ENCODE measurements at regions of chr11 and their contacts with region 1.

Region 1: GRCh38 chr11:72471005-72471898 is 36.9 kb upstream of the CLPB start:
- DNase-seq: peak; percentile 62
- ATAC-seq: peak; percentile 99
- H3K4me3 ChIP-seq: no peak overlapping the region
- H3K27ac ChIP-seq: no peak overlapping the region
- H3K4me1 ChIP-seq: no peaks in the 10 kb centered on the region
- H3K27me3 ChIP-seq: peaks cover 39% of the 10 kb centered on the region
- CTCF ChIP-seq: peak; percentile 80
- POLR2A ChIP-seq: no peak
- RAD21 ChIP-seq: peak; percentile 73

Region 2: GRCh38 chr11:72454791-72455190 is 16.5 kb before region 1 on chr11:
- CTCF ChIA-PET with region 1: interaction called, 18 read pairs
- POLR2A ChIA-PET with region 1: no interaction called
- dilution Hi-C with region 1: no loop called
- in situ Hi-C with region 1: no loop called
- intact Hi-C with region 1: no loop called
- DNase-seq: no peak
- ATAC-seq: no peak
- H3K4me3 ChIP-seq: no peak overlapping the region
- H3K27ac ChIP-seq: no peak overlapping the region
- H3K4me1 ChIP-seq: no peaks in the 10 kb centered on the region
- H3K27me3 ChIP-seq: peaks cover 54% of the 10 kb centered on the region
- CTCF ChIP-seq: no peak
- POLR2A ChIP-seq: no peak
- RAD21 ChIP-seq: no peak

Region 3: GRCh38 chr11:72460091-72460647 is 11.1 kb before region 1 on chr11:
- CTCF ChIA-PET with region 1: interaction called, 18 read pairs
- POLR2A ChIA-PET with region 1: no interaction called
- dilution Hi-C with region 1: no loop called
- in situ Hi-C with region 1: no loop called
- intact Hi-C with region 1: no loop called
- DNase-seq: no peak
- ATAC-seq: no peak
- H3K4me3 ChIP-seq: no peak overlapping the region
- H3K27ac ChIP-seq: no peak overlapping the region
- H3K4me1 ChIP-seq: no peaks in the 10 kb centered on the region
- H3K27me3 ChIP-seq: peaks cover 54% of the 10 kb centered on the region
- CTCF ChIP-seq: no peak
- POLR2A ChIP-seq: no peak
- RAD21 ChIP-seq: no peak

Region 4: GRCh38 chr11:72537051-72537450 is 65.8 kb after region 1 on chr11:
- CTCF ChIA-PET with region 1: no interaction called
- POLR2A ChIA-PET with region 1: no interaction called
- dilution Hi-C with region 1: no loop called
- in situ Hi-C with region 1: no loop called
- intact Hi-C with region 1: no loop called
- DNase-seq: no peak
- ATAC-seq: no peak
- H3K4me3 ChIP-seq: no peak overlapping the region
- H3K27ac ChIP-seq: no peak overlapping the region
- H3K4me1 ChIP-seq: no peaks in the 10 kb centered on the region
- H3K27me3 ChIP-seq: peaks cover 41% of the 10 kb centered on the region
- CTCF ChIP-seq: no peak
- POLR2A ChIP-seq: no peak
- RAD21 ChIP-seq: no peak

Region 5: DNA sequence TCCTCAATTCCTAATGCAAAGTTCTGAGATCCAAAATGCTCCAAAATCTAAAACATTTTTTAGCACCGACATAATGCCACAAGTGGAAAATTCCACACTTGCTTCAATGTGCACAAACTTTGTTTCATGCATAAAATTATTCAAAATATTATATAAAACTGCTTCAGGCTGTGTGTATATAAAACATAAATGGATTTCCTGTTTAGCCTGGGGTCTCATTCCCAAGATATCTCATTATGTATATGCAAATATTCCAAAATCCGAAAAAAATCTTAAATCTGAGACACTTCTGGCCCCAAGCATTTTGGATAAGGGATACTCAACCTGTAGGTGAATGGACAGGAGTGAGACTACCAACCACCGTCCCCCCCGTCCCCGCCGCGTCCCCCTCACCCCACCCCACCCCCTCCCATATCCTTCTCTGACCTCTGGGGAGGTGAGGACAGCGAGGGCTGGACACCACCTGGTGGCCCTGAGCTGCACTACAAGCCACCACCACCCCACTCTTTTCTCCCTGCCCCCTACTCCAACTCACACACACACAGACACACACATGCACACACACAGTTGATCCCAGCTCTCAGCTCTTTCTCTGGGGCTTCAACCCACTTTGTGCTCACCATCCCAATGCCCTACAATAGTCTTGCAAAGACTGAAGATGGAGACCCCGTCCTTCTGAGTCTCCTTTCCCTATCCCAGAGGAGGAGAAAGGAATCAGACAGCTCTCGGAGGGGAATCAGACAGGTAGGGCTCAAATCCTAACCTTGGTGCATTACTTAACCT is 102.0 kb after region 1 on chr11:
- CTCF ChIA-PET with region 1: no interaction called
- POLR2A ChIA-PET with region 1: no interaction called
- dilution Hi-C with region 1: no loop called
- in situ Hi-C with region 1: no loop called
- intact Hi-C with region 1: loop called (anchors 1 kb)
- DNase-seq: peak; percentile 11
- ATAC-seq: peak; percentile 88
- H3K4me3 ChIP-seq: no peak overlapping the region
- H3K27ac ChIP-seq: no peak overlapping the region
- H3K4me1 ChIP-seq: 0 out of 2 replicates have a peak, but pooled peaks cover 1% of the 10 kb centered on the region
- H3K27me3 ChIP-seq: peaks cover 24% of the 10 kb centered on the region
- CTCF ChIP-seq: peak; percentile 54
- POLR2A ChIP-seq: no peak
- RAD21 ChIP-seq: peak; percentile 58

Region 6: GRCh38 chr11:72613977-72614376 is 142.7 kb after region 1 on chr11:
- CTCF ChIA-PET with region 1: no interaction called
- POLR2A ChIA-PET with region 1: no interaction called
- dilution Hi-C with region 1: no loop called
- in situ Hi-C with region 1: no loop called
- intact Hi-C with region 1: no loop called
- DNase-seq: no peak
- ATAC-seq: no peak
- H3K4me3 ChIP-seq: no peak overlapping the region
- H3K27ac ChIP-seq: no peak overlapping the region
- H3K4me1 ChIP-seq: no peaks in the 10 kb centered on the region
- H3K27me3 ChIP-seq: peaks cover 84% of the 10 kb centered on the region
- CTCF ChIP-seq: no peak
- POLR2A ChIP-seq: no peak
- RAD21 ChIP-seq: no peak

Region 7: DNA sequence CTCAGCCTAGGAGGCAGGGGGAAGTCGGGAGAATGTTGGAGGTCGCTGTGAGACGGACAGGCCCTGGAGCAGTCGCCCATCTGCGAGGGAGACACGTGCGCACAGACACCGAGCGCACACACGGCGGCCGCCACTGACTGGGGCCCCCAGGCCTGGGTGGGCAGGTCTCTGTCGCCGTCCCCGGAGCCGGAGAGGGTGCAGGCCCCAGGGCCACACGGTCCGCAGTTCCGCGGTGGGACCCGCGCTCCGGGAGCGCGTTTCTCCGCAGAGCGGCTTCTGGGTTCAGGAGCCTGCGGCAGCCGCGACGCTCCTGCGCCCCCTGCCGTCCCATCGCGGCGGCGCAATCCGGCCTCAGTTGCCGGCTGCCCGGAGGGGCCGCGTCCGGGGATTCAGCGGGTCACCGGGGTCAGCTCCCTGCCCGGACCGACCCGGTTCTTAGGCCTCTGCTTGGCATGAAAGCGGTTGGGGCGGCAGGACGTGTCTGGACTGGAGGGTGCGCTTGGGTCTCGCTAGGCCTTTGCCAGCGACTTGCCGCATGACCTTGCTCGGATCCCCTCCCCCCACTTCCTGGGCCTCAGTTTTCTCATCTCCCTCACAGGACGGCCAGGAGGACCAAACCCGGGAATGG is 171.7 kb after region 1 on chr11:
- CTCF ChIA-PET with region 1: interaction called, 5 read pairs
- POLR2A ChIA-PET with region 1: no interaction called
- dilution Hi-C with region 1: no loop called
- in situ Hi-C with region 1: loop called (anchors 10 kb)
- intact Hi-C with region 1: loop called (anchors 1 kb)
- DNase-seq: peak; percentile 11
- ATAC-seq: peak; percentile 87
- H3K4me3 ChIP-seq: no peak overlapping the region; the same call in 1 of the 2 replicates
- H3K27ac ChIP-seq: no peak overlapping the region
- H3K4me1 ChIP-seq: peaks cover 2% of the 10 kb centered on the region; the same call in 1 of the 2 replicates
- H3K27me3 ChIP-seq: peaks cover 55% of the 10 kb centered on the region
- CTCF ChIP-seq: peak; percentile 84
- POLR2A ChIP-seq: no peak
- RAD21 ChIP-seq: peak; percentile 72

Region 8: DNA sequence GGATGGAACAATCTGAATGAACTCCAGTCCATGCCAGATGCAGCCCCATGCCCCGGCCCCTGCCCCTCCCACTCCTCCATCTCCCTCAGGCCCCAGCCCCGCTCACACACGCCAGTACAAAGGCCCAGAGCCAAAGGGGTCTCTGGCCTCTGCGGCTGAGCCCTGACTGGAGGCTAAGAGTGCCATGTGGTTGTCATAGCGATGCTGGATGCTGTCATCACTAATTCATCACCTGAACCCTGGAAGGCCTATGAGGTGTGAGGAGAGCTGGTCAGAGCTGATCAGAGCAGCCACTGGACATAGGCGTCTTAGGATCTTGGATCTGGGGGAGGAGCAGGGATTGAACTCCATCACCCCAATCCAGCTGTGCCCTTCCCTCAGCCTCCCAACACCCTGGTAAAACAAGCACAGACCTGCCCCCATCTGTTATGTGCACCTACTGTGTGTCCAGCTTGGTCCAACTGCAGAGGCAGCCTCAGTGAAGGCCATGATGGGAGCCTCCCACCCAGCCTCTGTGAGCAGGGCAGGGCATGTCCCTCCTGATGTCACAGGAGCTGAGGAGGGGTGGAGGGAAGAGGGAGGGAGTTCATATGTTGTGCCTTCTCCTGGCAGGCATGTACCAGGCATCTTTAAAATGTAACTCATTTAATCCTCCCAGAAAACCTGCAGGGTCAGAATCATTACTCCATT is 186.3 kb after region 1 on chr11:
- CTCF ChIA-PET with region 1: no interaction called
- POLR2A ChIA-PET with region 1: no interaction called
- dilution Hi-C with region 1: no loop called
- in situ Hi-C with region 1: no loop called
- intact Hi-C with region 1: no loop called
- DNase-seq: no peak
- ATAC-seq: no peak
- H3K4me3 ChIP-seq: no peak overlapping the region
- H3K27ac ChIP-seq: no peak overlapping the region
- H3K4me1 ChIP-seq: no peaks in the 10 kb centered on the region
- H3K27me3 ChIP-seq: peaks cover 90% of the 10 kb centered on the region
- CTCF ChIP-seq: no peak
- POLR2A ChIP-seq: no peak
- RAD21 ChIP-seq: no peak

Region 9: DNA sequence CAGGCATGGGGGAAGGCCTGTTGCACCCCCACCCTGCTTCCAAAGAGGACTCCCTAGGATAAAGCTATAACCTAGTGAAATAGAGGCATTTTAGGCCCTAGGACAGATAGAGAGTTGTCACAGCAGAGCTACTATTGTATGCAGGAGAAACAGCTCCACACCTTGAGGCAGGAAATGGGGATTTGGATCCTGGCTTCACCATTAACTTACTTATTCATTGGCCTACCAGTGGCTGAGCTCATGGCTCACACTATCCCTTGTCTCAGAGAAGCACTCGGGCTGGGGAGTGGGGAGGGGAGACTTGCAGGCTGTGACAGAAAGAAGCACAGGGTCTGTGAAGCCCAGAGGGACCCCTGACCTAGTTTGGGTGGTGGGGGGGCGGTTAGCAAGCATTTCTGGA is 204.0 kb after region 1 on chr11:
- CTCF ChIA-PET with region 1: interaction called, 3 read pairs
- POLR2A ChIA-PET with region 1: interaction called, 10 read pairs
- dilution Hi-C with region 1: no loop called
- in situ Hi-C with region 1: no loop called
- intact Hi-C with region 1: no loop called
- DNase-seq: no peak
- ATAC-seq: no peak
- H3K4me3 ChIP-seq: no peak overlapping the region
- H3K27ac ChIP-seq: no peak overlapping the region
- H3K4me1 ChIP-seq: no peaks in the 10 kb centered on the region
- H3K27me3 ChIP-seq: peaks cover 80% of the 10 kb centered on the region
- CTCF ChIP-seq: no peak
- POLR2A ChIP-seq: no peak
- RAD21 ChIP-seq: no peak

Region 10: DNA sequence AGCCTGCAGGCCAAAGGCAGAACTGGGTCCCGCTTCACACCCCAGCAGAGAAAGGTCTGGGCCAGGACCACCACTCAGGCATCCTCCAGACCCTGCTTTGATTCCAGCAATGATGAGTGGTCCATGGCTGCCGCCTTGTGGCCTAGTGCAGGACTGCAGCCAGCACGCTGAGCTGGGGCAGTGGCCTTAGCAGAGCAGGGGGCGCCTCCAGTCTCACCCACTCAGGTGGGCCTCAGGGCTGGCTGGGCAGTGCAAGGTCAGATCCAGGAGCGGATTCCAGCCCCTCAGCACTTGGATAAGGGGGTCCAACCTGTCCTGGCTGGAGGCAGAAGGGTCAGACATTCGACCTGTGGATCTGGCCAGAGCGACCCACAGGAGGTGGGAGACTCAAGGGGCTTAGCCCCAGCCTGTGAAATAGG is 212.5 kb after region 1 on chr11:
- CTCF ChIA-PET with region 1: interaction called, 3 read pairs
- POLR2A ChIA-PET with region 1: no interaction called
- dilution Hi-C with region 1: no loop called
- in situ Hi-C with region 1: no loop called
- intact Hi-C with region 1: loop called (anchors 1 kb)
- DNase-seq: peak; percentile 19
- ATAC-seq: peak; percentile 77
- H3K4me3 ChIP-seq: no peak overlapping the region
- H3K27ac ChIP-seq: no peak overlapping the region
- H3K4me1 ChIP-seq: peaks cover 2% of the 10 kb centered on the region; the same call in 1 of the 2 replicates
- H3K27me3 ChIP-seq: peaks cover 8% of the 10 kb centered on the region; the same call in 1 of the 2 replicates
- CTCF ChIP-seq: peak; percentile 77
- POLR2A ChIP-seq: no peak
- RAD21 ChIP-seq: peak; percentile 76

Region 11: GRCh38 chr11:72799441-72799840 is 328.2 kb after region 1 on chr11:
- CTCF ChIA-PET with region 1: no interaction called
- POLR2A ChIA-PET with region 1: no interaction called
- dilution Hi-C with region 1: no loop called
- in situ Hi-C with region 1: no loop called
- intact Hi-C with region 1: no loop called
- DNase-seq: no peak
- ATAC-seq: no peak
- H3K4me3 ChIP-seq: no peak overlapping the region
- H3K27ac ChIP-seq: no peak overlapping the region
- H3K4me1 ChIP-seq: 0 out of 2 replicates have a peak, but pooled peaks cover 2% of the 10 kb centered on the region
- H3K27me3 ChIP-seq: no peaks in the 10 kb centered on the region
- CTCF ChIP-seq: no peak
- POLR2A ChIP-seq: no peak
- RAD21 ChIP-seq: no peak

Measured in IMR-90 (cell line).